ENCODE measurements at regions of chr9 and their contacts with region 1.

Region 1: GRCh38 chr9:6054280-6055099 is 39.1 kb upstream of the RANBP6 start:
- DNase-seq: peak; percentile 8
- H3K27ac ChIP-seq: no peak overlapping the region
- CTCF ChIP-seq: no peak; the same call in 1 of the 2 replicates

Region 2: DNA sequence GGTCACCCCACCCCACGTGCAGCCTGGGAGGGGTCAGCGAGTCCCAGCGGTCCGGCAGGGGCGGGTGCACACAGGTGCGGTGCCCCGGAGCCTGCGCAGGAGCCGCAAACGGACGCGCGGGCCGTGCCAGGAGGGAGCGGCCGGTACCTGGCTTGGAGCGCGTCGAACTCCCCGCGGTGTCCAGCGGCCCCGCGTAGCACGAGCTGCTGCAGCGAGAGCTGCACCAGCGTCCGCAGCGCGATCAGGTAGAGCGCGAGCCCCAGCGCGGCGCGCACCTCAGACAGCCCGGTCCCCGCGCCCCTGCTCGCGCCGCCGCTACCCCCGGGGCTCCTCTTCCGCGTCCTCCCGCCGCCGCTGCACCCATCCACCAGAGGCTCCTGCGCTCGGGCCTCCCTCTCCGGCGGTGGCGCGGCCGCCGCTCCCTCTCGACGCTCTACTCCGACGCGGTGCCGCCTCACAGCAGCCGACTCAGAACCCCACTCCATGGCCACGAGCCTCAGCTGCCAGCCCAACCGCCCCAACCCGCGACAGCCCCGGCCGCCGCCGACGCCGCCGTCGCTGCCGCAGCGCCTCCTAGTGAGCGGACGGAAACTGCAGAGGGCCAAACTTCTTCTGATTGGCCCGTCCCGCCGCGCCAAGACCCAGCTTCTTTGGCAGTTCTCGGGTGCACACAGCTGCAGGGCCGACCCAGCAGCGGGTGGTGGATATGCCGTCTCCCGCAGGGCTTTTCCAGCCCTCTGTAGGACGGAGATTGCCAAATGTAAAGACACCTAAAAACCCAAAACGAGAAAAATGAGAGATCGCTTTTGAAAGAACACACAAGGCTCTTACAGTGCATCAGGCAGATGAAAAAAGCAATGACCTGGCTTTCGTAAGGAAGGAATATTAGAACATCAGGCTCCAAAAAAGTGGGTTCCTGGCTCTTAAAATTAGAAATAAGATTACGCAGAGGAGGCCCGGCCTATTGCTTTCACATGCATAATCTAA is 221.7 kb before region 1 on chr9 and contains the start of gene ERMP1:
- CTCF ChIA-PET with region 1: no interaction called
- POLR2A ChIA-PET with region 1: no interaction called
- DNase-seq: peak; percentile 56
- H3K27ac ChIP-seq: peak within 1 kb of the TSS; percentile 81
- CTCF ChIP-seq: peak; percentile 95

Region 3: GRCh38 chr9:6305954-6306563 is 251.6 kb after region 1 on chr9:
- CTCF ChIA-PET with region 1: interaction called, 18 read pairs
- POLR2A ChIA-PET with region 1: no interaction called
- DNase-seq: peak; percentile 21
- H3K27ac ChIP-seq: no peak overlapping the region
- CTCF ChIP-seq: peak; percentile 69

Measured in RWPE1 (cell line).